ENCODE measurements at regions of chr18 and their contacts with region 1.

Region 1: DNA sequence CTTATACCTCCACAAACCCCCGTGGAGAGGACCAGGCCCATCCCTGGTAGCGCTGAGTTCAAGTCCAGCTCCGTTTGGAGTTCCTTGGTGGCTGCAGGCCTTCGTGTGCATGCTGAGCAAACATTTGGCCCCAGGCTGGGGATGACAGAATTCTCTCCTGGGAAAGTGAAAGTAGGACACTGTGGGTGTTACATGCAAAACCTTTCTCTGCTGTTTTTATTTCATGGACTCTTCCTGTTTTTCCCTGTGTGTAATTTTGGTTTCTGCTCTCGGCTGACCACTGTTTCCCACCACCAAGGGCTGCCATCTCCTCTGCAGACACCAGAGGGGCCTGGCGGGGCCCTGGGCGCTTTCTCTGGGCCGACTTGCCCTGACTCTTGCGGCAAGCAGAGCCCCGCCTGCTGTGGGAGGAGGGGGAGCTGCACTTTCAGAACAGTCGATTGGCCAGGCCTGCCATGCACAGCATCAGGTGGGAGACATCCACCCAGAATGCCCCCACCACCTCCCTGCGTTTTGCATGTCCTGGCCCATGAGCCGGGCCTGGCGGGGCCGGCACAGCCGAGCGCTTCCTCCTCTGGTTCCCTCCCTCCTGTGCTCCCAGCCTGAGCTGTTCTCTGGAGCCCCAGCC is 102.4 kb downstream of the CABLES1 start:
- DNase-seq: peak; percentile 53
- H3K4me3 ChIP-seq: peak overlapping the region; percentile 1 to 45 (median 32)
- H3K27ac ChIP-seq: no peak overlapping the region
- H3K4me1 ChIP-seq: peaks cover 17% of the 10 kb centered on the region
- H3K27me3 ChIP-seq: no peaks in the 10 kb centered on the region
- CTCF ChIP-seq: peak; percentile 6 to 41

Region 2: DNA sequence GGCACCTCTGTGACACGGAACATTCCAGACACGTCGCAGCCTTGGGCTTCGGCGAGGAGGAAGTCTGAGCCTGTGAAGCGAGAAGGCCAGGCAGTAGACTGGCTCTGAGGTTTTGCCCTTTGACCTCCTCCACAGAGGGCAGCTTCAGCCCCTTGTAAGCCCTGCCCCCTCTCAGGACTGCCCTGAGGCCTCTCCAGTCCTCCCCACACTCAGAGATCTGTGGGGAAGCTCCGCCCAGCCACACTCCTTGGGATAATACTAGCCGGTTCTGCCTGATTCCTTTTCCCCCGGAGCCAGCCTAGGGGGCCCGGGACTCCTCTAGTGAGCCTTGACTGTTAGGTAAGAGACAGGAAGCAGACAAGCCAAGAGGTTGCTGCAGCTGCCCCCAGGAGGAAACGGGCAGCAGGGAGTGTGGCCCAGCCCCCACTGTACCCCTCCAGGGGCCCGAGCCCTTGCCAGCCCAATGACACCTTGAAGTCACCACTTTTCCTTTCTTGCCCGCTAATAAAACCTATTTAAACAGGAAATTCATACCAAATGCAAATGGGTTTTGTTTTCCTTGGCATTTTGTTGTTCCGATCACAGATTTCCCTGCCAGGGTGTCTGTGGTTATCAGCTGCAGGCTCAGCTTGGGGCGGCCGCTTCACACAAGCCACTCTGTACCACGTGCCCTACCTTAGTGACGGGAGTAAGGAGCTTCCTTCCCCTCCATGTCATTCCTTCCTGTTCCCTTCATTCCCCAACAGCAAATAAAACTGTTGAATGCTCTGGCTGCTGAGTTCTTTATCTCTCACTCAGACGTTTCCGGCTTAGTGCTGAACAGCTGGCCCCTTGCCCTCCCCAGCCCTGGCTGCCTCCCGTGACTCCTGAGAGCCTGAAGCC is 22.3 kb after region 1 on chr18:
- CTCF ChIA-PET with region 1: no interaction called
- dilution Hi-C with region 1: no loop called
- in situ Hi-C with region 1: no loop called
- intact Hi-C with region 1: loop called (anchors 2 kb)
- DNase-seq: peak; percentile 46
- H3K4me3 ChIP-seq: no peak overlapping the region
- H3K27ac ChIP-seq: no peak overlapping the region
- H3K4me1 ChIP-seq: peaks cover 30% of the 10 kb centered on the region
- H3K27me3 ChIP-seq: no peaks in the 10 kb centered on the region
- CTCF ChIP-seq: no peak

Region 3: GRCh38 chr18:23317975-23318675 is 80.5 kb after region 1 on chr18:
- CTCF ChIA-PET with region 1: no interaction called
- dilution Hi-C with region 1: no loop called
- in situ Hi-C with region 1: no loop called
- intact Hi-C with region 1: loop called (anchors 5 kb)
- DNase-seq: peak; percentile 74
- H3K4me3 ChIP-seq: no peak overlapping the region
- H3K27ac ChIP-seq: no peak overlapping the region
- H3K4me1 ChIP-seq: peaks cover 23% of the 10 kb centered on the region
- H3K27me3 ChIP-seq: no peaks in the 10 kb centered on the region
- CTCF ChIP-seq: no peak

Region 4: GRCh38 chr18:23450022-23450421 is 212.4 kb after region 1 on chr18:
- CTCF ChIA-PET with region 1: no interaction called
- dilution Hi-C with region 1: no loop called
- in situ Hi-C with region 1: no loop called
- intact Hi-C with region 1: no loop called
- DNase-seq: no peak
- H3K4me3 ChIP-seq: no peak overlapping the region
- H3K27ac ChIP-seq: no peak overlapping the region
- H3K4me1 ChIP-seq: peaks cover 11% of the 10 kb centered on the region
- H3K27me3 ChIP-seq: no peaks in the 10 kb centered on the region
- CTCF ChIP-seq: no peak